ENCODE measurements at regions of chr18 and their contacts with region 1.

Region 1: DNA sequence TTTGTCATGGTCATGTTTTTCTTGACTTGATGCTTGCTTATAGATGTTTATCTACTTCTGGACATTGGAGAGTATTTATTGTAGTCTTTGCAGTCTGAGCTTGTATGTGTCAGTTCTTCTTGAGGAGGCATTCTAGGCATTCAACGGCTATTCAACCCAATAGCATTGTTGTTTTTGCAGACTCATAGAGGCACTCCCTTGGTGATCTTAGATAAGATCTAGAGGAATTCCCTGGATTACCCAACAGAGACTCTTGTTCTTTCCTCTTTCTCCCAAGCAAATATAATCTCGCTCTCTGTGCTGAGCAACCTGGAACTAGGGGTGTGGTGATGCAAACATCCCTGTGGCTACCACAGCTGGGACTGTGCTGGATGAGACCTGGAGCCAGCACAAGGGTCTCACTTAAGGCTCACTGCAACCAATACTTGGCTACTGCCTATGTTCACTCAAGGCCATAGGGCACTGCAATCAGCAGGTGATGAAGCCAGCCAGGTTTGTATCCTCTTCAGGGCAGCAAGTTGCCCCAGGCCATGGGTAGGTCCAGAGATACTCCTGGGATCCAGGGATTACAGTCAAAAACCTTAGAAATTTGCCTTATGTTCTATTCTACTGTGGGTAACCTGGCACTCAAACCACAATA is 40.2 kb downstream of the SYT4 start:
- DNase-seq: no peak
- ATAC-seq: no peak
- H3K4me3 ChIP-seq: no peak overlapping the region
- H3K27ac ChIP-seq: no peak overlapping the region
- H3K4me1 ChIP-seq: no peaks in the 10 kb centered on the region
- H3K27me3 ChIP-seq: no peaks in the 10 kb centered on the region
- CTCF ChIP-seq: no peak

Region 2: GRCh38 chr18:42860011-42860410 is 377.0 kb before region 1 on chr18:
- intact Hi-C with region 1: loop called in 1 of 10 experiments (anchors 10 kb)
- DNase-seq: no peak
- ATAC-seq: no peak
- H3K4me3 ChIP-seq: no peak overlapping the region
- H3K27ac ChIP-seq: no peak overlapping the region
- H3K4me1 ChIP-seq: no peaks in the 10 kb centered on the region
- H3K27me3 ChIP-seq: no peaks in the 10 kb centered on the region
- CTCF ChIP-seq: no peak